ENCODE measurements at regions of chr20 and their contacts with region 1.

Region 1: GRCh38 chr20:63475206-63475605 is 2.8 kb upstream of the KCNQ2 start:
- DNase-seq: no peak
- H3K4me3 ChIP-seq: no peak overlapping the region
- H3K27ac ChIP-seq: no peak overlapping the region
- H3K4me1 ChIP-seq: no peaks in the 10 kb centered on the region
- H3K27me3 ChIP-seq: peaks cover 84% of the 10 kb centered on the region
- CTCF ChIP-seq: no peak

Region 2: DNA sequence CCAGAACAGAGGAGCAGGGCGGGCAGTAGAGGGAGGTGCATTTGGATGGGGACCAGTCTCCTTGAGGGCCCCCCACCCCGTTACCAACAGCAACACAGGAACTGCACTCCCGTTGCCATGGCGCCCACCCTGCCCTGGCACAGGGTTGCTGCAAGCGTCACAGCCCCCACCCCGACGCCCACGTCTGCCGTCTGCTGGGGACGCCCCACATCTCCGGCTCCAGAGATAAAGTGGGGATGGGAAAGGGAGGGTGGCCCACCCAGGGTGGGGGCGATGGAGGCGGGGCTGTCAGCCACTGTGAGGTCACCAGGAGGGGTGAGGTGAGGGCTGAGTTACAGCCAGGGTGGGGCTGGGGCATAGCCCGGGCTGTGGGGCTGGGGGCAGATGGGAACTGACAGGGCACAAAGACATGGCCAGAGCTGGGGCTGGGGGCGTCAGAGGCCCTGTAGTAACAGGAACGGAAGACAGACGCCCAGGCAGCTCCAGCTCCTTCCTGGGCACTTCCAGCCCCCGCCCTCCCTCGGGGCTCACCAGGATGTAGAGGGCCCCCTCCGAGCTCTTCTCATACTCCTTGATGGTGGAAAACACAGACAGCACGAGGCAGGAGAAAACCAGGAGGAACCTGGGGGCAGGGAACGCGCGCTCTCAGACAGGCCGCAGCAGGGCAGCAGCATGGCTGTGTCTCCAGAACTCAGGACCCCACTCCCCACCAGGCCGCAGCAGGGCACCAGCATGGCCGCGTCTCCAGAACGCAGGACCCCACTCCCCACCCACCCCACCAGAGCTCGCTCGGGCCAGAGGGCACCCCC is 28.8 kb before region 1 on chr20:
- CTCF ChIA-PET with region 1: no interaction called
- POLR2A ChIA-PET with region 1: no interaction called
- intact Hi-C with region 1: no loop called
- DNase-seq: no peak
- H3K4me3 ChIP-seq: no peak overlapping the region
- H3K27ac ChIP-seq: no peak overlapping the region
- H3K4me1 ChIP-seq: no peaks in the 10 kb centered on the region
- H3K27me3 ChIP-seq: peaks cover 20% of the 10 kb centered on the region
- CTCF ChIP-seq: no peak

Region 3: GRCh38 chr20:63508072-63508768 is 33.0 kb after region 1 on chr20:
- CTCF ChIA-PET with region 1: no interaction called
- POLR2A ChIA-PET with region 1: no interaction called
- intact Hi-C with region 1: no loop called
- DNase-seq: no peak
- H3K4me3 ChIP-seq: no peak overlapping the region
- H3K27ac ChIP-seq: no peak overlapping the region
- H3K4me1 ChIP-seq: no peaks in the 10 kb centered on the region
- H3K27me3 ChIP-seq: peaks cover 98% of the 10 kb centered on the region
- CTCF ChIP-seq: no peak

Region 4: DNA sequence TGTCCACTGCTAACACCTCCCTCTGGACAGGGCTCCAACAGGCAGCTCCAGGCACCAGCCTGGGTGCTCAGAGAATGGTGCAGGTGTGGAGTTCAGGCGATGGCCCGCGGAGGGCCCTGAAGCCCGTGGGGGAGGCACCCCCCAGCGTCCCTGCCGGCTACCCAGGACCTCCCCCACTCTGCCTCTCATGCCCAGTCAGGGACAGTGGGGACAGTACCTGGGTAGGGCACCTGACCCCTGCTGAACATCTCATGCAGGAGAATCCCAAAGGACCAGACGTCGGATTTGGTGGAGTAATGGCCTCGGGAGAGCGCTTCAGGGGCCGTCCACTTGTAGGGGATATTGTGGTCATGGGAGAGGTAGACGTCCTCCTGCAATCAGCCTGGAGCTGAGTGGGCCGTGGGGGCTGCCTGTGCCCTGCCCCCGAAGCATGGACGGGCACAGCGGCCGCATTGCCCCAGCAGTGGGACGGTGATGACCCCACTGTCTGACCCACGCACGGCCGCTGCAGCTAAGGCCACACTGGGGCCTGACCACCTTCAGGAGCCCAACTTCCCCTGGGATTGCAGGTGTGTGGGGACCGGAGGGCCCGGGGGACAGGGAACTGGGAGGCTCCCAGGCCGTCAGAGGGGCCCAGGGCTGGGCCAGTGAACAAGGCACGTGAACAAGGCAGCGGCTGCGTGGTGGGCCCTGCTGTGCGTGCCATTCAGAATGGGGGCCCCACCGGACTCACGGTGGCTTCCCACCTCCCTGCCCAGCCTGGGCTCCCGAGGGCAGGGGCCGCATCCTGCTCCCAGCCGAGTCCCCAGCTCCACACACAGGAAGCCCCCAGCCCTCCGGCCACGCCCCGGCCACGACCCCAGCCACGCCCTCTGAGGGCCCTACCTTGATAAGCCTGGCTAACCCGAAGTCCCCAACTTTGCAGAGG is 54.9 kb after region 1 on chr20:
- CTCF ChIA-PET with region 1: interaction called, 10 read pairs
- POLR2A ChIA-PET with region 1: no interaction called
- intact Hi-C with region 1: no loop called
- DNase-seq: no peak
- H3K4me3 ChIP-seq: no peak overlapping the region
- H3K27ac ChIP-seq: no peak overlapping the region
- H3K4me1 ChIP-seq: peaks cover 18% of the 10 kb centered on the region
- H3K27me3 ChIP-seq: no peaks in the 10 kb centered on the region
- CTCF ChIP-seq: no peak

Region 5: GRCh38 chr20:63767456-63767855 is 292.2 kb after region 1 on chr20:
- CTCF ChIA-PET with region 1: no interaction called
- POLR2A ChIA-PET with region 1: no interaction called
- intact Hi-C with region 1: no loop called
- DNase-seq: no peak
- H3K4me3 ChIP-seq: no peak overlapping the region
- H3K27ac ChIP-seq: no peak overlapping the region
- H3K4me1 ChIP-seq: no peaks in the 10 kb centered on the region
- H3K27me3 ChIP-seq: no peaks in the 10 kb centered on the region
- CTCF ChIP-seq: no peak

Region 6: GRCh38 chr20:64101731-64102621 is 626.8 kb after region 1 on chr20:
- CTCF ChIA-PET with region 1: interaction called, 16 read pairs
- POLR2A ChIA-PET with region 1: no interaction called
- intact Hi-C with region 1: no loop called
- DNase-seq: peak; percentile 32 to 60
- H3K4me3 ChIP-seq: no peak overlapping the region
- H3K27ac ChIP-seq: no peak overlapping the region
- H3K4me1 ChIP-seq: no peaks in the 10 kb centered on the region
- H3K27me3 ChIP-seq: peaks cover 95% of the 10 kb centered on the region
- CTCF ChIP-seq: peak; percentile 79